IMR-90 (cell line): ENCODE measurements at regions of chr9 and their contacts with region 1.

Region 1: GRCh38 chr9:76302947-76303940 is 91.0 kb downstream of the RFK start:
- DNase-seq: peak; percentile 72
- ATAC-seq: peak; percentile 79
- H3K4me3 ChIP-seq: no peak overlapping the region
- H3K27ac ChIP-seq: no peak overlapping the region
- H3K4me1 ChIP-seq: peaks cover under 1% of the 10 kb centered on the region; the same call in 1 of the 2 replicates
- H3K27me3 ChIP-seq: no peaks in the 10 kb centered on the region
- CTCF ChIP-seq: peak; percentile 80
- POLR2A ChIP-seq: no peak
- RAD21 ChIP-seq: peak; percentile 94

Region 2: GRCh38 chr9:75866273-75866871 is 436.9 kb before region 1 on chr9:
- CTCF ChIA-PET with region 1: interaction called, 3 read pairs
- POLR2A ChIA-PET with region 1: no interaction called
- dilution Hi-C with region 1: no loop called
- in situ Hi-C with region 1: no loop called
- intact Hi-C with region 1: loop called (anchors 2 kb)
- DNase-seq: peak; percentile 44
- ATAC-seq: peak; percentile 81
- H3K4me3 ChIP-seq: no peak overlapping the region
- H3K27ac ChIP-seq: no peak overlapping the region
- H3K4me1 ChIP-seq: no peaks in the 10 kb centered on the region
- H3K27me3 ChIP-seq: no peaks in the 10 kb centered on the region; the same call in none of the 2 replicates
- CTCF ChIP-seq: peak; percentile 66
- POLR2A ChIP-seq: no peak
- RAD21 ChIP-seq: peak; percentile 48

Region 3: DNA sequence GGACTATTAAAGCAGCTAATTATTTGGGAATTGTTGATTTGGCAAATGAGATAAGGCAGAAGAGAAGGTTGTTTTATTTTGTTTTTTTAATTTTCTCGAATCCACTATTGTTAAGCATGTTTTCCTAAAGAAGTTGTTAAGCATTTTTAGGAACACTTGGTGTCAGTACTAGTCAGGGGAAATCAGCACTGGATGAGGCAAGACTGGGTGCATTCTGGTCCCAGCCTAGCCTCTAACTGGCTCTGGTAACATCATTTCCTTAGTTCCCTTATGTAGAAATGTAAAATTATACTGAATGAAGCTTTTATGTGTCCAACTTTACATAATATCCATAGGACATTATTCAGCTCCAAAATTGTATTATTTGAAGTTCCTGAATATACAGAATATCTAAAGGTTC is 216.7 kb before region 1 on chr9:
- CTCF ChIA-PET with region 1: interaction called, 6 read pairs
- POLR2A ChIA-PET with region 1: no interaction called
- dilution Hi-C with region 1: no loop called
- in situ Hi-C with region 1: no loop called
- intact Hi-C with region 1: loop called (anchors 2 kb)
- DNase-seq: peak; percentile 26
- ATAC-seq: peak; percentile 46
- H3K4me3 ChIP-seq: no peak overlapping the region
- H3K27ac ChIP-seq: no peak overlapping the region
- H3K4me1 ChIP-seq: no peaks in the 10 kb centered on the region
- H3K27me3 ChIP-seq: no peaks in the 10 kb centered on the region
- CTCF ChIP-seq: peak; percentile 44
- POLR2A ChIP-seq: no peak
- RAD21 ChIP-seq: peak; percentile 52

Region 4: DNA sequence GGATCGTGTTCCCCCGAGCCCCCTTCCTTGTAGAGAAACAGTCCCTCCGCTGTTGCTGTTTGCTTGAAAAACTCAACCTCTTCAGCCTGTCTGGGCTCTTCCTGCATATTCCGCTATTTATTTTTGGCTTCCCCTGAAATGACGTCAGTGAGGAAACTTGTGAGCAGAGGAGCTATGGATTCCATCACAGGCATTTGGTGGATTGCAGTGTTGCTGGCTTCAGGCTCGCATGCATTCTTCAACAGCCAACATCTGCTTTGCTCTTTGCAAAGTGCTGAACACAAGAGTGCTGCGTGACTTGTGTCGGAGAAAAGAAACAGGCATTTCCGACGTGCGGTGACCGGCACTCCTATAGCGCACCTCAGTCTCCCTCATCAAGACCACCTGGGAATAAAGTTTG is 141.7 kb before region 1 on chr9:
- CTCF ChIA-PET with region 1: interaction called, 4 read pairs
- POLR2A ChIA-PET with region 1: no interaction called
- dilution Hi-C with region 1: no loop called
- in situ Hi-C with region 1: no loop called
- intact Hi-C with region 1: loop called (anchors 5 kb)
- DNase-seq: peak; percentile 95
- ATAC-seq: peak; percentile 82
- H3K4me3 ChIP-seq: no peak overlapping the region
- H3K27ac ChIP-seq: peak overlapping the region; percentile 65; the same call in 1 of the 2 replicates
- H3K4me1 ChIP-seq: peaks cover 19% of the 10 kb centered on the region
- H3K27me3 ChIP-seq: no peaks in the 10 kb centered on the region
- CTCF ChIP-seq: no peak
- POLR2A ChIP-seq: no peak
- RAD21 ChIP-seq: no peak

Region 5: GRCh38 chr9:76216161-76216649 is 87.0 kb before region 1 on chr9:
- CTCF ChIA-PET with region 1: no interaction called
- POLR2A ChIA-PET with region 1: no interaction called
- dilution Hi-C with region 1: no loop called
- in situ Hi-C with region 1: no loop called
- intact Hi-C with region 1: loop called (anchors 2 kb)
- DNase-seq: peak; percentile 98
- ATAC-seq: peak; percentile 87
- H3K4me3 ChIP-seq: no peak overlapping the region
- H3K27ac ChIP-seq: peak overlapping the region; percentile 98
- H3K4me1 ChIP-seq: peaks cover 24% of the 10 kb centered on the region
- H3K27me3 ChIP-seq: no peaks in the 10 kb centered on the region
- CTCF ChIP-seq: no peak
- POLR2A ChIP-seq: no peak
- RAD21 ChIP-seq: no peak

Region 6: DNA sequence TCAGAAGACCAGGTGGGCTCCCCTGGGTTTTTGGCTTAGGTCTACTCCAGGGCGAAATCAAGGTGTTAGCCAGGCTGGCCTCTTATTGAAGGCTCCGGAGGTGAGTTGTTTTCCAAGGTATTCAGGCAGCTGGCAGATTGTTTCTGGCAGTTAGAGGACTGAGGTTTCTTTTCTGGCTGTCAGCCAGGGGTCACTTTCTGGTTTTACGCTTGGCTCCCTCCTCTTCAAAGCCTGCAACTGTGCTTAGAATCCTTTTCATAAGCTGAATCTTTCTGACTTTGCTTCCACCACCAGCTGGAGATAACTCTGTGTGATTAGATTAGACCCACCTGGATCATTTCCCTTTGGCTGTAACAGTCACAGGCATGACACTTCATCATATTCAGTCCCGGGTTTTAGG is 66.3 kb after region 1 on chr9:
- CTCF ChIA-PET with region 1: no interaction called
- POLR2A ChIA-PET with region 1: no interaction called
- dilution Hi-C with region 1: no loop called
- in situ Hi-C with region 1: no loop called
- intact Hi-C with region 1: no loop called
- DNase-seq: peak; percentile 50
- ATAC-seq: no peak
- H3K4me3 ChIP-seq: no peak overlapping the region
- H3K27ac ChIP-seq: no peak overlapping the region
- H3K4me1 ChIP-seq: peaks cover 12% of the 10 kb centered on the region
- H3K27me3 ChIP-seq: no peaks in the 10 kb centered on the region
- CTCF ChIP-seq: no peak
- POLR2A ChIP-seq: no peak
- RAD21 ChIP-seq: no peak